ENCODE measurements at regions of chr1 and their contacts with region 1.

Region 1: GRCh38 chr1:85048296-85049064 is at the start of gene MCOLN3:
- DNase-seq: peak in 7 of 9 donors; percentile 9 to 56 (median 24)
- ATAC-seq: peak; percentile 67
- H3K4me3 ChIP-seq: peak within 1 kb of the TSS; percentile 38
- H3K4me3 Mint-ChIP-seq: peak within 1 kb of the TSS; percentile 70 to 86 (median 80)
- H3K27ac ChIP-seq: no peak within 1 kb of the TSS
- H3K27ac Mint-ChIP-seq: peak within 1 kb of the TSS in 1 of 9 donors; percentile 55
- H3K4me1 ChIP-seq: peaks cover 10 to 21% of the 10 kb centered on the region in 2 donors
- H3K4me1 Mint-ChIP-seq: peaks cover 7 to 35% (median 29%) of the 10 kb centered on the region in 7 donors
- H3K27me3 ChIP-seq: peaks cover 11 to 13% of the 10 kb centered on the region in 2 donors
- H3K27me3 Mint-ChIP-seq: peaks cover 47 to 60% (median 54%) of the 10 kb centered on the region in 5 donors
- total RNA-seq, gene MCOLN3: 0.77 to 11.1 (median 0.95) TPM

Region 2: DNA sequence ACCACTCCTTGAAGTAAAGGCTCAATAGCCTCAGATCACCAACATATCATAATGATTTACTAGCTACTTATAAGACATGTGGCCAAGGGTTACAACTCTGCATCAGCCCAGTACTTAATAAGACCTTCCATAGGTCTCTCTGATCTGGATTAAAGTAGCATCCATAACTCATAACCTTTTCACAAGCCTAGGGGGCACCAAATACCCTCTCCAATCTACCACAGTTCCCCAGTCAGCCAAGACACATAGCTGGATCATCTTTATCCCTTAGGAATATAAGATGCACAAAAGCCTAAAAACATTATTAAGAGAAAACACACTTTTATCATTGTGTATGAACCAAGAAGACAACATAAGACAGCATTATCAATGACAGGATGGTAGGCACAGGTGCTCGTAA is 380.3 kb before region 1 on chr1:
- CTCF ChIA-PET with region 1: no interaction called
- POLR2A ChIA-PET with region 1: no interaction called
- intact Hi-C with region 1: no loop called
- DNase-seq: peak in 2 of 9 donors; percentile 11 to 24
- ATAC-seq: peak; percentile 51
- H3K4me3 ChIP-seq: no peak overlapping the region
- H3K4me3 Mint-ChIP-seq: no peak overlapping the region
- H3K27ac ChIP-seq: no peak overlapping the region
- H3K27ac Mint-ChIP-seq: peak overlapping the region in 1 of 9 donors; percentile 34
- H3K4me1 ChIP-seq: peaks cover 0 to 2% of the 10 kb centered on the region in 2 donors
- H3K4me1 Mint-ChIP-seq: peaks cover 0 to 14% (median 10%) of the 10 kb centered on the region in 7 donors
- H3K27me3 ChIP-seq: no peaks in the 10 kb centered on the region
- H3K27me3 Mint-ChIP-seq: no peaks in the 10 kb centered on the region

Region 3: DNA sequence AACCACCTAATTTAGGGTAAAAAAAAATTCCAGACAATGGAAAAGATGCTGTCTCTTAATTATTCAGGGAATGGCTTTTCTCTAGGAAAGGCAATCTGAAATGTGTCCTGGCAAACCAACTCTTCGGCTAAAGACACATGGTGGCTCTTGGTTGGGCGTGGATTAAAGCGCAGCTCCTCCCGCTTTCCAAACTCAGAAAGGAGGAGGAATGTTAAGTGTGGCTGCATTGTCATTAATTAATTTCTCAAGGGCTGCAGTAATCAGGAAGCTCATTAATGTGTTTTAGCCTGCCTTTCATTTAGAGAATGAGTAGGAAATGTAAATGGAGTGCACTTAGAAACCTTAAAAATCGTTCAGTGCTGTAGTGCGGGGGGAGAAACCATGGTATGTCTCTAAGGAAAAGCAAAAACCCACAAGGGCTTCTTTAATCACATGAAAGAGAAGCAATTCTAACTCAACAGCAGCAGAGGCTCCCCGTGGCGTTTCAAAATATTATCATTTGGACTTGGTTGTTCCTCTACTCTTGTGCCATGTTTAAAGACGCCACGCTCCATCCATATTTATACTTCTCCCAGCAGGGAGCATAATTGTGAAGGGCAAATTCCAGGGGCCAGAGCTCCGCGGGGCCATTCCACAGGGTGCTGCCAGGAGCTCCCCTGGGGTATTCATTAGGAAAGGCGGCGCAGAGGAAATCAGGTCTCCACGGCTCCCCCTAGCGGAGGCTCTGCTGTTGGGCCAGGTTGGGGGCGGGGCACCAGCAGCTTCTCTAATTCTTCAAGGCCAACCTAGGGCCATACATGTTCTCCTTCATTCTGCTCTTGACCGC is 266.3 kb before region 1 on chr1:
- CTCF ChIA-PET with region 1: no interaction called
- POLR2A ChIA-PET with region 1: no interaction called
- intact Hi-C with region 1: loop called in 1 of 2 experiments (anchors 10 kb)
- DNase-seq: peak; percentile 63 to 82 (median 75)
- ATAC-seq: peak; percentile 93
- H3K4me3 ChIP-seq: peak overlapping the region; percentile 23
- H3K4me3 Mint-ChIP-seq: peak overlapping the region; percentile 60 to 89 (median 84)
- H3K27ac ChIP-seq: peak overlapping the region; percentile 26
- H3K27ac Mint-ChIP-seq: peak overlapping the region in 8 of 9 donors; percentile 48 to 88 (median 78)
- H3K4me1 ChIP-seq: peaks cover 0 to 14% of the 10 kb centered on the region in 2 donors
- H3K4me1 Mint-ChIP-seq: peaks cover 17 to 35% (median 30%) of the 10 kb centered on the region in 7 donors
- H3K27me3 ChIP-seq: no peaks in the 10 kb centered on the region
- H3K27me3 Mint-ChIP-seq: peaks cover 0 to 7% (median 0%) of the 10 kb centered on the region in 5 donors

Region 4: GRCh38 chr1:84996846-84997666 is 51.4 kb before region 1 on chr1 and contains the start of gene MCOLN2:
- CTCF ChIA-PET with region 1: no interaction called
- POLR2A ChIA-PET with region 1: no interaction called
- intact Hi-C with region 1: loop called in 1 of 2 experiments (anchors 2 kb)
- DNase-seq: peak; percentile 7 to 69 (median 37)
- ATAC-seq: peak; percentile 89
- H3K4me3 ChIP-seq: peak within 1 kb of the TSS; percentile 77
- H3K4me3 Mint-ChIP-seq: peak within 1 kb of the TSS; percentile 80 to 95 (median 86)
- H3K27ac ChIP-seq: no peak within 1 kb of the TSS
- H3K27ac Mint-ChIP-seq: peak within 1 kb of the TSS in 4 of 9 donors; percentile 33 to 85 (median 66)
- H3K4me1 ChIP-seq: peaks cover 17 to 26% of the 10 kb centered on the region in 2 donors
- H3K4me1 Mint-ChIP-seq: peaks cover 13 to 57% (median 16%) of the 10 kb centered on the region in 7 donors
- H3K27me3 ChIP-seq: peaks cover 0 to 13% of the 10 kb centered on the region in 2 donors
- H3K27me3 Mint-ChIP-seq: peaks cover 28 to 55% (median 35%) of the 10 kb centered on the region in 5 donors
- total RNA-seq, gene MCOLN2: 2.5 to 35.7 (median 3.1) TPM

Region 5: GRCh38 chr1:85061711-85062424 is 13.4 kb after region 1 on chr1:
- CTCF ChIA-PET with region 1: no interaction called
- POLR2A ChIA-PET with region 1: interaction called, 3 read pairs
- intact Hi-C with region 1: loop called (anchors 1 to 2 kb)
- DNase-seq: peak; percentile 49 to 93 (median 86)
- ATAC-seq: peak; percentile 99
- H3K4me3 ChIP-seq: peak overlapping the region; percentile 57
- H3K4me3 Mint-ChIP-seq: peak overlapping the region; percentile 79 to 93 (median 88)
- H3K27ac ChIP-seq: peak overlapping the region; percentile 24
- H3K27ac Mint-ChIP-seq: peak overlapping the region; percentile 57 to 96 (median 92)
- H3K4me1 ChIP-seq: peaks cover 4 to 6% of the 10 kb centered on the region in 2 donors
- H3K4me1 Mint-ChIP-seq: peaks cover 11 to 21% (median 14%) of the 10 kb centered on the region in 7 donors
- H3K27me3 ChIP-seq: no peaks in the 10 kb centered on the region
- H3K27me3 Mint-ChIP-seq: peaks cover 3 to 39% (median 13%) of the 10 kb centered on the region in 5 donors

Region 6: GRCh38 chr1:85091671-85092280 is 43.3 kb after region 1 on chr1:
- CTCF ChIA-PET with region 1: no interaction called
- POLR2A ChIA-PET with region 1: no interaction called
- intact Hi-C with region 1: loop called in 1 of 2 experiments (anchors 5 kb)
- DNase-seq: peak in 1 of 9 donors; percentile 7
- ATAC-seq: no peak
- H3K4me3 ChIP-seq: peak overlapping the region; percentile 35
- H3K4me3 Mint-ChIP-seq: peak overlapping the region; percentile 39 to 79 (median 58)
- H3K27ac ChIP-seq: no peak overlapping the region
- H3K27ac Mint-ChIP-seq: peak overlapping the region in 7 of 9 donors; percentile 15 to 72 (median 50)
- H3K4me1 ChIP-seq: peaks cover 0 to 6% of the 10 kb centered on the region in 2 donors
- H3K4me1 Mint-ChIP-seq: peaks cover 2 to 12% (median 8%) of the 10 kb centered on the region in 7 donors
- H3K27me3 ChIP-seq: no peaks in the 10 kb centered on the region
- H3K27me3 Mint-ChIP-seq: peaks cover 0 to 41% (median 12%) of the 10 kb centered on the region in 5 donors